ENCODE measurements at regions of chr10 and their contacts with region 1.

Region 1: GRCh38 chr10:69377933-69378332 is 38.8 kb downstream of the TACR2 start:
- DNase-seq: peak; percentile 96
- H3K4me3 ChIP-seq: no peak overlapping the region
- H3K27ac ChIP-seq: peak overlapping the region; percentile 88
- H3K4me1 ChIP-seq: peaks cover 21% of the 10 kb centered on the region
- H3K27me3 ChIP-seq: no peaks in the 10 kb centered on the region
- CTCF ChIP-seq: no peak
- POLR2A ChIP-seq: no peak

Region 2: DNA sequence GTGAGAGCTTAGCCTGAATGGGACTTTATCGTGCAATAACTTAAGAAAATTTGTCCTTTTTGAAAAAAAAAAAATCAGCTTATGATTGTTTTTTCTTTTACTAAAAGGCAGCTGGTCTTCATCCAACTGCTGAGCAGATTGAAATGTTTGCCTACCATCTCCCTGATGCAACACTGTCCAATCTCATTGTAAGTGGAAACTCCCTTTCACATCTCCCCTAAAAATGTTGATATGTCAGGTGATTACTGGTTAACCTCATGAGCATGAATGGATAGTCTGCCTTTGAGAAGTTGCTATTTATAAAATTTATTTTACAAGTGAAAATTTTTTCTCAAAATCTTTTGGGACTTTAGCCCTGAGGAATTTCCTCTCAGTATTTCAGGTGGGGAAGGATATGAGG is 175.6 kb before region 1 on chr10:
- CTCF ChIA-PET with region 1: no interaction called
- POLR2A ChIA-PET with region 1: no interaction called
- dilution Hi-C with region 1: no loop called
- intact Hi-C with region 1: no loop called
- DNase-seq: no peak
- H3K4me3 ChIP-seq: no peak overlapping the region
- H3K27ac ChIP-seq: no peak overlapping the region
- H3K4me1 ChIP-seq: no peaks in the 10 kb centered on the region
- H3K27me3 ChIP-seq: no peaks in the 10 kb centered on the region
- CTCF ChIP-seq: no peak
- POLR2A ChIP-seq: no peak

Region 3: GRCh38 chr10:69237528-69238159 is 140.3 kb before region 1 on chr10:
- CTCF ChIA-PET with region 1: interaction called, 5 read pairs
- POLR2A ChIA-PET with region 1: no interaction called
- dilution Hi-C with region 1: loop called (anchors 25 kb)
- intact Hi-C with region 1: loop called (anchors 1 kb)
- DNase-seq: peak; percentile 81
- H3K4me3 ChIP-seq: no peak overlapping the region
- H3K27ac ChIP-seq: no peak overlapping the region
- H3K4me1 ChIP-seq: peaks cover 16% of the 10 kb centered on the region
- H3K27me3 ChIP-seq: no peaks in the 10 kb centered on the region
- CTCF ChIP-seq: peak; percentile 81 to 90
- POLR2A ChIP-seq: no peak

Region 4: DNA sequence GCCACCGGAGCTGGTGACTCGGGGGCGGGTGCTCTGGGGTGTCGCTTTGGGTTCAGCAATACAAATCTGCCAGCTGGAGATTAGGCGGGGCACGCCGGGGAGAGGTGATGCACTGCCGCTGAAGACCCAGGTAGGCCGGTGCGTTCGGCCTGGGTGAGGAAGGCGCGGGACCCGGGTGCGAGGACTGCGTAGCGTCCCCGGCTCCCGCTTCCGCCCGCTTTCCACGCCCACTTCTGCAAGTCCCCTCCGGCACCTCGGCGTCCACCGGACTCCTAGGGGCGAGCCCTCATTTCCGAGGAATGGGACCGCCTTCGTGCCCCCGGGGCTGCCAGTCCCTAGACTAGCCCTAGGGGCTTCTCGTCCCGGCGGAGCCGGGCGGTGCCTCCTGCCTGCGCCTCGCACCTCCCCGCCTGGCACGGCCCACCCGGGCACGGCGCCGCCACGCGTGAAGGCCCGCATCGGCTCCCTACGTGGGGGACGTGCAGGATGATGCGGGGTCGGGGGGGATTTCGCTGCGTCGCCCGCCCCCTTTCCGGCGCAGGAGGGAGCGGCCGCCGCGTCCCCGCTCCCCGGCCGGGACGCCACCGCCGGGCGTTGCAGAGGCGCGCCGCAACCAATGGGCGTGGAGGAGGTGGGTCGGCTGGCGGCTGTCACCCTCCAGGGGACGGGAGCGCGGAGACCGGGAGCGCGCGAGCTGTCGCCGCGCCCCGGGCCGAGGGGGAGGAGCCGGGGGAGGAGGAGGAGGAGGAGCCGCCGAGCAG is 59.6 kb before region 1 on chr10:
- CTCF ChIA-PET with region 1: interaction called, 3 read pairs
- POLR2A ChIA-PET with region 1: interaction called, 3 read pairs
- dilution Hi-C with region 1: no loop called
- intact Hi-C with region 1: loop called (anchors 1 kb)
- DNase-seq: peak; percentile 86
- H3K4me3 ChIP-seq: peak overlapping the region; percentile 47 to 92 (median 70)
- H3K27ac ChIP-seq: peak overlapping the region; percentile 84
- H3K4me1 ChIP-seq: peaks cover 48% of the 10 kb centered on the region
- H3K27me3 ChIP-seq: no peaks in the 10 kb centered on the region
- CTCF ChIP-seq: no peak
- POLR2A ChIP-seq: no peak

Region 5: DNA sequence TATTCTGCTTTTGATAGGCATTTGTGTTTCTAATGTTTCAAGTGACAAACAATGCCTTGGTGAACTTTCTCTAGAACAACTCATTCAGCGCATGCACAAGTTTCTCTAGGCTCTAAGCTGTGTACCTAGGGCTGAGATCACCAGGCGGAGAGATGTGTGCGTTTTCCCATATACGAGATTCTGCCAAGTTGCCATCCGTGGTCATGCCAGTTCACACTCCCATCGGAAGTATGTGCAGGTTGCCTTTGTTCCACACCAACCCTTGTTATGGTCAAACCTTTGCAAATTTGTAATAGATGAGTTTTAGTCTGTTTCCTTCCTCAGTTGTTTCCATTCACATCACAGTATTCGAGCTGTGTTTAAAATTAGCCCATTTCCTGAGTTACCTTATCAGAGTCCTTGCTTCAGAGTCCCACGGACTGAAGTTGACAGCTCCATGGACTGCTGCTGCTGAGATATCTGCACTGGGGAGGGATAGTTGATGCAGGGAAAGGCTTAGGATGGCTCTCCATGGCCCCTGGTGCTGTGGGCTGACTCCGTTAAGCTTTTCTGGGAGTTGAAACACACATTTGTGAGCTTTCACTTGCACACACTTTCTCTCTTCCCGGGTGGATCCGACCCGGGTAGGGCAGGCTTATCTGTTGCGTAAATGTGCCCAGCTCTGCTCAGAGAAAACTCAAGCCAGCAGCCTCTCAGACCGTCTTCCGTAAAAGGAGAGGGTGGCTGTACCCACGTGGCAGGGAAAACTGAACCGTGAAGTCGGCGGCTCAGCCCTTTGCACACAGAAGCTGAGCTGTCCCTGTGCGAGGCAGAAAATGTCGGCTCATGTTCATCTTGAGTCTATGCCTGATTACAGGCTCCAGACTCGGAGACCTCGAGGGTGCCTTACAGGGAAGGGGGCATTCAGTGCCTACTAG is 50.2 kb before region 1 on chr10:
- CTCF ChIA-PET with region 1: interaction called, 7 read pairs
- POLR2A ChIA-PET with region 1: no interaction called
- dilution Hi-C with region 1: no loop called
- intact Hi-C with region 1: loop called (anchors 2 kb)
- DNase-seq: peak; percentile 56
- H3K4me3 ChIP-seq: no peak overlapping the region
- H3K27ac ChIP-seq: peak overlapping the region; percentile 30
- H3K4me1 ChIP-seq: peaks cover 22% of the 10 kb centered on the region
- H3K27me3 ChIP-seq: no peaks in the 10 kb centered on the region
- CTCF ChIP-seq: no peak
- POLR2A ChIP-seq: no peak

Region 6: GRCh38 chr10:69337296-69338132 is 40.4 kb before region 1 on chr10:
- CTCF ChIA-PET with region 1: interaction called, 7 read pairs
- POLR2A ChIA-PET with region 1: interaction called, 5 read pairs
- dilution Hi-C with region 1: no loop called
- intact Hi-C with region 1: loop called (anchors 2 kb)
- DNase-seq: peak; percentile 34
- H3K4me3 ChIP-seq: no peak overlapping the region
- H3K27ac ChIP-seq: no peak overlapping the region
- H3K4me1 ChIP-seq: peaks cover 31% of the 10 kb centered on the region
- H3K27me3 ChIP-seq: no peaks in the 10 kb centered on the region
- CTCF ChIP-seq: no peak
- POLR2A ChIP-seq: no peak

Region 7: GRCh38 chr10:69348816-69349541 is 29.0 kb before region 1 on chr10:
- CTCF ChIA-PET with region 1: interaction called, 4 read pairs
- POLR2A ChIA-PET with region 1: interaction called, 6 read pairs
- dilution Hi-C with region 1: no loop called
- intact Hi-C with region 1: loop called (anchors 1 kb)
- DNase-seq: peak; percentile 74
- H3K4me3 ChIP-seq: no peak overlapping the region
- H3K27ac ChIP-seq: peak overlapping the region; percentile 77
- H3K4me1 ChIP-seq: peaks cover 52% of the 10 kb centered on the region
- H3K27me3 ChIP-seq: no peaks in the 10 kb centered on the region
- CTCF ChIP-seq: no peak
- POLR2A ChIP-seq: no peak

Region 8: GRCh38 chr10:69360485-69361324 is 17.2 kb before region 1 on chr10:
- CTCF ChIA-PET with region 1: interaction called, 7 read pairs
- POLR2A ChIA-PET with region 1: no interaction called
- dilution Hi-C with region 1: no loop called
- intact Hi-C with region 1: loop called (anchors 2 kb)
- DNase-seq: peak; percentile 40
- H3K4me3 ChIP-seq: no peak overlapping the region
- H3K27ac ChIP-seq: peak overlapping the region; percentile 35
- H3K4me1 ChIP-seq: peaks cover 28% of the 10 kb centered on the region
- H3K27me3 ChIP-seq: no peaks in the 10 kb centered on the region
- CTCF ChIP-seq: no peak
- POLR2A ChIP-seq: no peak

Measured in endothelial cell of umbilical vein (primary cell).